Ascending aorta (tissue), 2 donors: ENCODE measurements at regions of chr19 and their contacts with region 1.

Region 1: DNA sequence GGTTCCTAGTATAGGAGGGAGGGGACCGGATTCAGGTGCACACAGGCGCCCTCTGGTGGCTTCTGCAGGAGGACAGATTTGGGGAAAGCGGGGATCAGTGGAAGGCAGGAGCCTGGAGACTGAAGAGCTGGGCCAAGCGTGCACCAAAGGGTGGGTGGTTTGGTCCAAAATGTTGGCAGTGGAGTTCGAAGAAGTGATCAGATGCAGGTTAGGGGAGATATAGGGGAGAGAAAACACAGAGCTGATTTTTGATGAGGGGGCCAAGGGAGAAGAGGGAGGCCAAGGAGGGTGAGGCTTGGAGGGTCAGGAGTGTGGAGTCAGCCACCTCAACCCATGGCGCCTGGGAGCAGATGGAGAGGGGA is 6.8 kb upstream of the CARM1 start:
- DNase-seq: peak in 1 of 2 donors; percentile 89
- H3K4me3 ChIP-seq: peak overlapping the region; percentile 16 to 33
- H3K27ac ChIP-seq: peak overlapping the region in 1 of 2 donors; percentile 69
- H3K4me1 ChIP-seq: peaks cover 4 to 8% of the 10 kb centered on the region in 2 donors
- H3K27me3 ChIP-seq: no peaks in the 10 kb centered on the region
- CTCF ChIP-seq: peak; percentile 82 to 92 (median 89)

Region 2: GRCh38 chr19:10517760-10518443 is 346.6 kb before region 1 on chr19:
- intact Hi-C with region 1: no loop called
- DNase-seq: no peak
- H3K4me3 ChIP-seq: peak overlapping the region; percentile 31 to 53
- H3K27ac ChIP-seq: no peak overlapping the region
- H3K4me1 ChIP-seq: peaks cover 4 to 9% of the 10 kb centered on the region in 2 donors
- H3K27me3 ChIP-seq: peaks cover 4% of the 10 kb centered on the region
- CTCF ChIP-seq: no peak

Region 3: DNA sequence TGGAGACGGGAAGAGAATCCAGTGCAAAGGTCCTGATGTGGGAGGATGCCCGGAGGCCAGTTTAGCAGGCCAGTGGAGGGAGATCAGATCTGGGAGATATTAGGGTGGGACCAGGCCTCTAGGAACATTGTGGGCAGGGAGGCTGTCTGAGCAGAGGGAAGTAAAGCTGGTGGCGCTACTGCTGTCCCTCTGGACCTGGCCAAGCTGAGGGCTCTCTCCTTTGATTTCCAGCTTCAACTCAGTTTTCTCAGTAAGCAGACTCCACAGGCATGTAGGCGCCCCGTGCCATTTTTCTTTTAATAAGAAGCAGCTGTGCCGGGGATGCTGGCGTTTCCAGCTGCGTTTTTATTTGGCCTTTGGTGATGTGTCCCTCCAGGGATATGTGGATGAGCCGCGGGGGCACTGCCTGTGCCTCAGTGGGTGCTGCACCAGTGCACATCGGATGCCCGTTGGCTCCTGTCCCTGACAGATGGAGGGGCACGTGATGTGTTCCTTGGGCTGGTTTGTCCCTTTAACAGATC is 139.9 kb before region 1 on chr19:
- intact Hi-C with region 1: no loop called
- DNase-seq: no peak
- H3K4me3 ChIP-seq: no peak overlapping the region
- H3K27ac ChIP-seq: no peak overlapping the region
- H3K4me1 ChIP-seq: peaks cover 5 to 29% of the 10 kb centered on the region in 2 donors
- H3K27me3 ChIP-seq: no peaks in the 10 kb centered on the region
- CTCF ChIP-seq: no peak

Region 4: GRCh38 chr19:10780368-10780767 is 84.2 kb before region 1 on chr19:
- intact Hi-C with region 1: no loop called
- DNase-seq: peak; percentile 60 to 87
- H3K4me3 ChIP-seq: no peak overlapping the region
- H3K27ac ChIP-seq: peak overlapping the region; percentile 63 to 72
- H3K4me1 ChIP-seq: no peaks in the 10 kb centered on the region
- H3K27me3 ChIP-seq: no peaks in the 10 kb centered on the region
- CTCF ChIP-seq: no peak

Region 5: GRCh38 chr19:10817291-10818038 is 47.1 kb before region 1 on chr19:
- intact Hi-C with region 1: loop called (anchors 5 kb)
- DNase-seq: peak; percentile 42 to 89
- H3K4me3 ChIP-seq: peak overlapping the region; percentile 35 to 65
- H3K27ac ChIP-seq: peak overlapping the region; percentile 88 to 92
- H3K4me1 ChIP-seq: peaks cover 10 to 12% of the 10 kb centered on the region in 2 donors
- H3K27me3 ChIP-seq: no peaks in the 10 kb centered on the region
- CTCF ChIP-seq: no peak